CD8-positive, alpha-beta T cell (primary cell): ENCODE measurements at regions of chr3 and their contacts with region 1.

Region 1: GRCh38 chr3:50568947-50569749 is at the start of gene HEMK1:
- DNase-seq: peak; percentile 83 to 96 (median 94)
- ATAC-seq: peak; percentile 70
- H3K4me3 ChIP-seq: peak within 1 kb of the TSS; percentile 89 to 94
- H3K4me3 Mint-ChIP-seq: peak within 1 kb of the TSS; percentile 94
- H3K27ac ChIP-seq: peak within 1 kb of the TSS; percentile 83 to 89
- H3K27ac Mint-ChIP-seq: peak within 1 kb of the TSS; percentile 97
- H3K4me1 ChIP-seq: peaks cover 68% of the 10 kb centered on the region
- H3K4me1 Mint-ChIP-seq: peaks cover 67% of the 10 kb centered on the region
- H3K27me3 ChIP-seq: no peaks in the 10 kb centered on the region
- H3K27me3 Mint-ChIP-seq: no peaks in the 10 kb centered on the region
- CTCF ChIP-seq: no peak
- total RNA-seq, gene HEMK1: 11.1 to 12.5 TPM

Region 2: DNA sequence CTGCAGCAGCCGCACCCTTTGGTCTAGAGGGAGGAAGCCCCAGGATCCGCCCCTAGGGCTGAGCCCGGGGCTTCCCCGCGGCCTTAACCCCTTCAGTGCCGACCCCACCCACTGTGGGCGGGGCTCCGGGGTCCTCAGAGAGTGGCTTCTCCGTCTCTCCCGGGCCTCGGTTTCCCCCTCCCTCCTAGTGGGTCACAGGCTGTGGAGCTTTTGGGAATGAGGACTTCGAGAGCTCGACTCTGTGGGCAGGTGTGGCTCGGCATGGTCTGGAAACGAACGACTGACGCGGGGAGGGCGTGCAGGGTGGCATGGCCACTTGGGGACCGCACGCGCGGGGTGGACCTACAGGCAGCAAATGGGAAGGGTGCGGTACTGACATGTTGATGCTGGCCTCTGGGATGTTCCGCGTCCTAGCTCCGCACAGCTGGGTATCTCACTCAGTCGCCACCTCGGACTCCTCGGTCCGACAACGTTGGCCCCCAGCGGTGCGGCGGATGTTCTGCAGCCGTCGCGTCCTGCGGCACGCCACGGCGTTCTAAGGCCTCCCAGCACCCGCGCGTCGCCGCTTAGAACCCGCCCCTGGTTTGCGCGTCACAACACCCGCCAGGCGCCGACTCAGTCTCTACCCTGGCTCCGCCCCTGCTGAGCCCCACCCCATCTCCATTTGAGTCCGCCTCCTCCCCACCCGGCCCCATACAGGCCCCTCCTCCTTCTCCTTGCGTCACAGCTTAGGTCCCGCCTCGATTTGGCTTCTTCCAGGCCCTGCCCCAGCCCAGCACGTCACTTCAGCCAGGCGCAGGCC is 270.1 kb before region 1 on chr3 and contains the starts of genes HYAL3 and NAA80:
- CTCF ChIA-PET with region 1: no interaction called
- POLR2A ChIA-PET with region 1: no interaction called
- intact Hi-C with region 1: loop called (anchors 2 to 5 kb)
- DNase-seq: peak; percentile 85 to 100 (median 99)
- ATAC-seq: peak; percentile 89
- H3K4me3 ChIP-seq: peak within 1 kb of the TSS; percentile 97
- H3K4me3 Mint-ChIP-seq: peak within 1 kb of the TSS; percentile 99
- H3K27ac ChIP-seq: peak within 1 kb of the TSS; percentile 93 to 94
- H3K27ac Mint-ChIP-seq: peak within 1 kb of the TSS; percentile 99
- H3K4me1 ChIP-seq: peaks cover 25% of the 10 kb centered on the region
- H3K4me1 Mint-ChIP-seq: peaks cover 28% of the 10 kb centered on the region
- H3K27me3 ChIP-seq: no peaks in the 10 kb centered on the region
- H3K27me3 Mint-ChIP-seq: no peaks in the 10 kb centered on the region
- CTCF ChIP-seq: peak; percentile 53
- total RNA-seq, gene HYAL3: 2.1 to 3.2 TPM
- total RNA-seq, gene NAA80: 37.1 to 40.7 TPM

Region 3: GRCh38 chr3:50365080-50365841 is 203.9 kb before region 1 on chr3:
- CTCF ChIA-PET with region 1: interaction called, 4 read pairs
- POLR2A ChIA-PET with region 1: interaction called, 3 read pairs
- intact Hi-C with region 1: loop called in 1 of 2 experiments (anchors 1 kb)
- DNase-seq: peak; percentile 89 to 98 (median 94)
- ATAC-seq: peak; percentile 95
- H3K4me3 ChIP-seq: peak overlapping the region; percentile 68 to 81
- H3K4me3 Mint-ChIP-seq: peak overlapping the region; percentile 87
- H3K27ac ChIP-seq: peak overlapping the region; percentile 91 to 92
- H3K27ac Mint-ChIP-seq: peak overlapping the region; percentile 95
- H3K4me1 ChIP-seq: peaks cover 20% of the 10 kb centered on the region
- H3K4me1 Mint-ChIP-seq: peaks cover 35% of the 10 kb centered on the region
- H3K27me3 ChIP-seq: no peaks in the 10 kb centered on the region
- H3K27me3 Mint-ChIP-seq: no peaks in the 10 kb centered on the region
- CTCF ChIP-seq: no peak

Region 4: DNA sequence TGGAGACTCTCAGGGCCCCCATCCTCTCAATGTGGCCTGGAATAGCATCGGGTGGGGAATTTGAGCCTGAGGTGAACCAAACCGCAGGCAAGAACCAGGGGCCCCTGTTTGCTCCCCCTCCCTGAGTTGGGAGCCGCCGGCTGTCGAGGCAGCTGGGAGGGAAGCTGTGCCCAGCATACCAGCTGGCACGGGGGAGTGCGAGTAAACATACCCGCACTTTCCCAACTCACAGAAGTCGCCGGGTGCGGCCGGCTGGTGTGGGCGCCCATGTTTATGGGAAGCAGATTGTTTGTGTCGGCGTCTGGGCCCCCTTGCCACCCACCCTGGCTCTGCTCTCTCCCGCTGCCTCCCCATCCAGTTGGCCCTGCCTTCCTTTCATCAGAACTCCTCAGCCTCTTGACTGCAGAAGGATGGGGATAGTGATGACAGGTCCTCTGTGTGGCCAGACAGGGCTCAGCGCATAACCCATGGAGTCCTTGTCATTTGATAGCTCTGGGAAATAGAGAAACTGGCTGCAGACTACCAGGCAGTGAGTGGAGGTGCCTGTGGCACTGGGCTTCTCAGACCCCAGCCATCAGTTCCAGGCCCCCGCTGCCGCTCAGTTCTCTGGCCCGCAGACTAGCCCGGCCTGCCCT is 126.1 kb before region 1 on chr3:
- CTCF ChIA-PET with region 1: no interaction called
- POLR2A ChIA-PET with region 1: no interaction called
- intact Hi-C with region 1: no loop called
- DNase-seq: no peak
- ATAC-seq: no peak
- H3K4me3 ChIP-seq: no peak overlapping the region
- H3K4me3 Mint-ChIP-seq: no peak overlapping the region
- H3K27ac ChIP-seq: no peak overlapping the region
- H3K27ac Mint-ChIP-seq: no peak overlapping the region
- H3K4me1 ChIP-seq: peaks cover 2% of the 10 kb centered on the region
- H3K4me1 Mint-ChIP-seq: peaks cover 10% of the 10 kb centered on the region
- H3K27me3 ChIP-seq: no peaks in the 10 kb centered on the region
- H3K27me3 Mint-ChIP-seq: no peaks in the 10 kb centered on the region
- CTCF ChIP-seq: no peak

Region 5: DNA sequence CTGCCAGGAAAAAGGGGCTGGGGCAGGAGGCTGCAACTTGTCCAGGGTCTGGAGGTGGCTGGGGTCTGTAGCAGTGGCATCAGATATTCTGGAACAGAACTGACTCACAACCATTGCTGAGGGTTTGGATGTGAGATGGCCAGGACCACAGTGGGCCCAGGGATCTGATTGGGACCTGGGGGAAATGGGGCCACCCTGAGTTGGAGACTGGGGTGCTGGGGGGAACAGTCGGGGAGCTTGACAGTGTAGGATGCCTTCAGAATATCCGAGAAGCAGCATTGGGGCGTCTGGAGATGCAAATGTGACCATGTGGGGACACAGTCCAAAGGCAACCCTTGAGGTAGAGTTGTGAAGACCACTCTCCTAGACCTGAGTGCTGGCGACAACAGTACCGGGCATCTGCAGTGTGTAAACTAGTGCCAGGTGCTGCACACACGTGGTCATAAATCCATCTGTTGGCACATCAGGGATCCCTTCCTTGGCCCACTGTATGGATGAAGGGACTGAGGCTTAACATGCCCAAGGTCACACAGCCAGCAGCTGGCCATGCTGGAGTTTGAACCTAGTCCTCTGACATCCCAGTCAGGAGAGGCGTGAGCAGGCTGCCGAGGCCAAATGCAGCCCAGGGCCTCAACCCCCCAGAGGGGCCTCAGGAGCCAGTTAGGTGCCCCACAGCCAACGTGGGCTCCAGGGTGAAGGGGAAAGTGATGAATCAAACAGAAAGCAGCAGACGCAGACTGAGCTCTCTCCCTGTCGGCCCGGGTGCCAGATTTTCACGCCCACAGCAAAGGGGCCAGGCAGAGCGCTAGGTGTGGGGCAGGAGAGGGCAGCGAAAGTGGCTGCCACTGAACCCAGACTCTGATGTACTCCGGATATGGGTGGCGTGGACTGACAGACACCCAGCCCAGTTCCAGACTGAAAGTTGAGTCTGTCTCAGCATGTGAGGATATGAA is 18.9 kb after region 1 on chr3:
- CTCF ChIA-PET with region 1: interaction called, 153 read pairs
- POLR2A ChIA-PET with region 1: interaction called, 39 read pairs
- intact Hi-C with region 1: loop called (anchors 1 to 2 kb)
- DNase-seq: peak in 7 of 9 experiments; percentile 27 to 84 (median 58)
- ATAC-seq: peak; percentile 67
- H3K4me3 ChIP-seq: no peak overlapping the region
- H3K4me3 Mint-ChIP-seq: peak overlapping the region; percentile 33
- H3K27ac ChIP-seq: peak overlapping the region in 1 of 2 experiments; percentile 79
- H3K27ac Mint-ChIP-seq: peak overlapping the region; percentile 88
- H3K4me1 ChIP-seq: peaks cover 55% of the 10 kb centered on the region
- H3K4me1 Mint-ChIP-seq: peaks cover 54% of the 10 kb centered on the region
- H3K27me3 ChIP-seq: no peaks in the 10 kb centered on the region
- H3K27me3 Mint-ChIP-seq: no peaks in the 10 kb centered on the region
- CTCF ChIP-seq: no peak

Region 6: GRCh38 chr3:51268132-51268531 is 699.0 kb after region 1 on chr3:
- CTCF ChIA-PET with region 1: no interaction called
- POLR2A ChIA-PET with region 1: no interaction called
- intact Hi-C with region 1: no loop called
- DNase-seq: no peak
- ATAC-seq: no peak
- H3K4me3 ChIP-seq: no peak overlapping the region
- H3K4me3 Mint-ChIP-seq: no peak overlapping the region
- H3K27ac ChIP-seq: no peak overlapping the region
- H3K27ac Mint-ChIP-seq: peak overlapping the region; percentile 56
- H3K4me1 ChIP-seq: peaks cover 29% of the 10 kb centered on the region
- H3K4me1 Mint-ChIP-seq: peaks cover 41% of the 10 kb centered on the region
- H3K27me3 ChIP-seq: no peaks in the 10 kb centered on the region
- H3K27me3 Mint-ChIP-seq: no peaks in the 10 kb centered on the region
- CTCF ChIP-seq: no peak

Region 7: GRCh38 chr3:51311055-51311454 is 741.9 kb after region 1 on chr3:
- CTCF ChIA-PET with region 1: no interaction called
- POLR2A ChIA-PET with region 1: no interaction called
- intact Hi-C with region 1: loop called in 1 of 2 experiments (anchors 2 kb)
- DNase-seq: peak in 2 of 9 experiments; percentile 40 to 51
- ATAC-seq: peak; percentile 38
- H3K4me3 ChIP-seq: no peak overlapping the region
- H3K4me3 Mint-ChIP-seq: no peak overlapping the region
- H3K27ac ChIP-seq: no peak overlapping the region
- H3K27ac Mint-ChIP-seq: no peak overlapping the region
- H3K4me1 ChIP-seq: no peaks in the 10 kb centered on the region
- H3K4me1 Mint-ChIP-seq: peaks cover 3% of the 10 kb centered on the region
- H3K27me3 ChIP-seq: no peaks in the 10 kb centered on the region
- H3K27me3 Mint-ChIP-seq: no peaks in the 10 kb centered on the region
- CTCF ChIP-seq: peak; percentile 31

Region 8: DNA sequence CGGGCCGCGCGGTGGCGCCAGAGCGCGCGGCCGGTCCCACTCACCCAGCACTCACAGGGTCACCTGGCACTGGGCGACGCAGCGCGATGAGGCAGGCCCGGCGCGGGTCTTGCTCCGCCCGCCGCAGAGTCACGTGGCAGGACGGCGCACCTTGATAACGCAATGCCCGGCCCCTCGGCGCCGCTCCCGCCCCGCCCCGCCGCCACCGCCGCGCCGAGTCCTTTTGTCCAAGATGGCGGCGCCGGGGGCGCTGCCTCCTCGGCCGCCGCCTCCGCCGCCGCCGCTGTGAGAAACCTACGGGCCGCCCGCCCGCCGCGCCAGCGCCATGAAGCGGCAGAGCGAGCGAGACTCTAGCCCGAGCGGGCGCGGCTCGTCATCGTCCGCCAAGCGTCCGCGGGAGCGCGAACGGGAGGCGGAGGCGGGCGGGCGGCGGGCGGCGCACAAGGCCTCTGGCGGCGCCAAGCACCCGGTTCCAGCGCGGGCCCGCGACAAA is 822.0 kb after region 1 on chr3 and contains the start of gene RBM15B:
- CTCF ChIA-PET with region 1: interaction called, 4 read pairs
- POLR2A ChIA-PET with region 1: no interaction called
- intact Hi-C with region 1: loop called in 1 of 2 experiments (anchors 2 kb)
- DNase-seq: peak; percentile 94 to 98 (median 97)
- ATAC-seq: peak; percentile 89
- H3K4me3 ChIP-seq: peak within 1 kb of the TSS; percentile 55 to 61
- H3K4me3 Mint-ChIP-seq: peak within 1 kb of the TSS; percentile 82
- H3K27ac ChIP-seq: peak within 1 kb of the TSS; percentile 71 to 88
- H3K27ac Mint-ChIP-seq: peak within 1 kb of the TSS; percentile 94
- H3K4me1 ChIP-seq: peaks cover 50% of the 10 kb centered on the region
- H3K4me1 Mint-ChIP-seq: peaks cover 68% of the 10 kb centered on the region
- H3K27me3 ChIP-seq: no peaks in the 10 kb centered on the region
- H3K27me3 Mint-ChIP-seq: no peaks in the 10 kb centered on the region
- CTCF ChIP-seq: peak; percentile 70
- total RNA-seq, gene RBM15B: 29.5 to 29.8 TPM

Region 9: GRCh38 chr3:52056968-52057805 is 1488.0 kb after region 1 on chr3:
- CTCF ChIA-PET with region 1: no interaction called
- POLR2A ChIA-PET with region 1: no interaction called
- intact Hi-C with region 1: loop called in 1 of 2 experiments (anchors 2 kb)
- DNase-seq: peak; percentile 99 to 100 (median 99)
- ATAC-seq: peak; percentile 84
- H3K4me3 ChIP-seq: peak overlapping the region; percentile 68 to 77
- H3K4me3 Mint-ChIP-seq: peak overlapping the region; percentile 91
- H3K27ac ChIP-seq: peak overlapping the region; percentile 52 to 87
- H3K27ac Mint-ChIP-seq: peak overlapping the region; percentile 90
- H3K4me1 ChIP-seq: peaks cover 36% of the 10 kb centered on the region
- H3K4me1 Mint-ChIP-seq: peaks cover 35% of the 10 kb centered on the region
- H3K27me3 ChIP-seq: no peaks in the 10 kb centered on the region
- H3K27me3 Mint-ChIP-seq: no peaks in the 10 kb centered on the region
- CTCF ChIP-seq: no peak